Ascending aorta (tissue), 2 donors: ENCODE measurements at regions of chr3 and their contacts with region 1.

Region 1: GRCh38 chr3:154252759-154253638 is 71.3 kb downstream of the DHX36 start:
- DNase-seq: peak; percentile 48 to 95
- H3K4me3 ChIP-seq: peak overlapping the region in 1 of 2 donors; percentile 21
- H3K27ac ChIP-seq: no peak overlapping the region
- H3K4me1 ChIP-seq: peaks cover 0 to 2% of the 10 kb centered on the region in 2 donors
- H3K27me3 ChIP-seq: no peaks in the 10 kb centered on the region
- CTCF ChIP-seq: peak; percentile 84 to 91 (median 89)

Region 2: DNA sequence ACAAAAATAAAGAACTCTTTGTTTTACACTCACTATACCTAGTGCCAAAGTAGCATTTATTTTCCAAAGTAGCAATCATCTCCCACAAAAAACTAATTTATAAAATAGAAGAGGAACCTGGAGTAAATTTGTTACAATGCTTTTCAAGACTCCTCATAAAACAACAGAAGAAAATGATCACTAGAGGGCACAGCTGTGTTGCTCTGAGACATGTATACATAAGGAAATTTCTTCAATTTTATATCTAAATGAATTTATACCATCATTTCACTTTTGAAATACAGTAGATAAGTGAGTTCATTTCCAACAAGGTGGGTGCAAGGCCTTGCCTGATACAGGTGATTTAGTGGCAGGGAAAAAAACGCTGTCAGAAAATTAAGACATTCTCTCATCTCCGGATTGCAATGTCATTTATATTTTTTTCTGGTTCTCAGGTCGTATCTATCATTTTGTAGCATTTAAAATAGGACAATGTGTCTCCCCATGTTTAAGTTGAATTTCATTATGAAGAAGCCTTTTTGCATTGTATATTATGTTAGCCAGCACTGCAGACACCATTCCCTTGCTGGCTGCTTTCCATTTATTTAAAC is 157.1 kb before region 1 on chr3:
- intact Hi-C with region 1: loop called (anchors 1 kb)
- DNase-seq: no peak
- H3K4me3 ChIP-seq: no peak overlapping the region
- H3K27ac ChIP-seq: no peak overlapping the region
- H3K4me1 ChIP-seq: no peaks in the 10 kb centered on the region
- H3K27me3 ChIP-seq: no peaks in the 10 kb centered on the region
- CTCF ChIP-seq: peak in 2 of 3 experiments; percentile 38 to 58

Region 3: GRCh38 chr3:155449613-155450267 is 1196.7 kb after region 1 on chr3:
- intact Hi-C with region 1: no loop called
- DNase-seq: no peak
- H3K4me3 ChIP-seq: no peak overlapping the region
- H3K27ac ChIP-seq: no peak overlapping the region
- H3K4me1 ChIP-seq: no peaks in the 10 kb centered on the region
- H3K27me3 ChIP-seq: no peaks in the 10 kb centered on the region
- CTCF ChIP-seq: no peak